AG04449 (cell line): ENCODE measurements at regions of chr11 and their contacts with region 1.

Region 1: DNA sequence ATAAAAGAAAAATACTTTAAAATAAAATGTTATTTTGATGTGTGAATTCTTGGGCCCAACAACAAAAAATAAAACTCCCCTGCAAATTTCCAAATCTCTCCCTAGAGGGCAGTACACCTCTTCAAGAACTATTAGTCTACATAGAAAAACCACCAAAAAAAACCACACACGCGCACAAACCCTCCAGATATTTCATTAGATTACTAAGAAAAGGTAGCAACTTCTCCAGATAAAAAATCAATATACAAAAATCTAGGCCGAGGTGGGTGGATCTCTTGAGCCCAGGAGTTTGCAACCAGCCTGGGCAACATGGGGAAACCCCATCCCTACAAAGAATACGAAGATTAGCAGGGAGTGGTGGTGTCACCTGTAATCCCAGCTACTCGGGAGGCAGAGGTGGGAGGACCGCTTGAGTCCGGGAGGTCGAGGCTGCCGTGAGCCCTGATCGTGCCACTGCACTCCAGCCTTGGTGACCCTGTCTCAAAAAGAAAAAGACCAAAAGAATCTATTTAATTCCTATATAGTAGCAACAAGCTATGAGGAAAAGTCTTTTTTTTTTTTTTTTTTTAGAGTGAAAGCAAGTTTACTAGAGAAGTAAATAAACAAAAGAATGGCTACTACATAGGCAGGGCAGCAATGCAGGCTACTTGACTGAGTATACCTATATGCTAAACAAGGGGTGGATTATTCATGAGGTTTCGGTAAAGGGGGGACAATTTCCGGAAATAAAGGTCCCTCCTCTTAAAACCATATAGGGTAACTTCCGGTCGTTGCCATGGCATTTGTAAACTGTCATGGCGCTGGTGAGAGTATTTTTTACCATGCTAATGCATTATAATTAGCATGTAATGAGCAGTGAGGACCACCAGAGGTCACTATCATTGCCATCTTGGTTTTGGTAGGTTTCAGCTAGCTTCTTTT is 13.1 kb downstream of the B3GNT6 start:
- DNase-seq: peak; percentile 65
- H3K4me3 ChIP-seq: peak overlapping the region; percentile 52
- CTCF ChIP-seq: peak; percentile 48

Region 2: DNA sequence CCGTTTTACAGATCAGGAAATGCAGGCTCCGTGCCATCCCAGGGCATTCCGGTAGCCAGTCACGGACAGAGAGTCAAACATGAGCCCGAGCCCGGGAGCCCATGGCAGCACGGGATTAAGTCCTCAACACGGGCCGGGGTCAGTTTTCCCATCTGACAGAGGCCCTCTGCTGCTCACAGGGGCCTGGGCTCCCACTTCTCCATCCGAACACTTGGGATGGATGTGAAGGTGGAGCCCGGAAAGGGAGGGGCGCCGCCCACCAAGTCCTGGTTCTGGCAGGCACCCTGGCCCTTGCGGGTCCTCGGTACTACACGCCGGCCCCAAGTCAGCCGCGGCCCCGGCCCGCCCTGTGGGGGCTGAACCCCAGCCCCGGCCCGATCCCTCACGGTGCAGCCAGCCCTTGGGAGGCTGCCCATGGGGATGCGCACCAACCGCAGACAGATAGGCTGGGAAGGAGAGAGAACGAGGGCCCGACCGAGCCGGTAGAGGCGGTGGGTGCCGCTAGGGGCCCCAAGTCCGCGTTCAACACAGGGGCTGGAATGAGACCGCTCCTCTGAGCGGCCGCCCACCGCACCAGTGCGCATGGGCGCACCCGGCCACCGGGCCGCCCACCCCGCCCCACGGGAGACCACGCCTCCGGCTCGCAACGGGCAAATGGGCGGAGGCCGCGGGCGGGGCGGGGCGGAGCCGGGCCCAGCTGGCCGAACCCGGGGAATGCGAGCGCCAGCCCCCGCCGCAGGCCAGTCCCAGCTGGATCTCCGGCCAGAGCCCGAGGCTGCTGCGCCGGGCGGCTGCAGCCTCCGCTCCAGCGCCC is 19.2 kb after region 1 on chr11 and contains the start of gene CAPN5:
- CTCF ChIA-PET with region 1: interaction called, 42 read pairs
- POLR2A ChIA-PET with region 1: interaction called, 10 read pairs
- DNase-seq: no peak
- H3K4me3 ChIP-seq: peak within 1 kb of the TSS; percentile 72
- CTCF ChIP-seq: peak; percentile 67

Region 3: DNA sequence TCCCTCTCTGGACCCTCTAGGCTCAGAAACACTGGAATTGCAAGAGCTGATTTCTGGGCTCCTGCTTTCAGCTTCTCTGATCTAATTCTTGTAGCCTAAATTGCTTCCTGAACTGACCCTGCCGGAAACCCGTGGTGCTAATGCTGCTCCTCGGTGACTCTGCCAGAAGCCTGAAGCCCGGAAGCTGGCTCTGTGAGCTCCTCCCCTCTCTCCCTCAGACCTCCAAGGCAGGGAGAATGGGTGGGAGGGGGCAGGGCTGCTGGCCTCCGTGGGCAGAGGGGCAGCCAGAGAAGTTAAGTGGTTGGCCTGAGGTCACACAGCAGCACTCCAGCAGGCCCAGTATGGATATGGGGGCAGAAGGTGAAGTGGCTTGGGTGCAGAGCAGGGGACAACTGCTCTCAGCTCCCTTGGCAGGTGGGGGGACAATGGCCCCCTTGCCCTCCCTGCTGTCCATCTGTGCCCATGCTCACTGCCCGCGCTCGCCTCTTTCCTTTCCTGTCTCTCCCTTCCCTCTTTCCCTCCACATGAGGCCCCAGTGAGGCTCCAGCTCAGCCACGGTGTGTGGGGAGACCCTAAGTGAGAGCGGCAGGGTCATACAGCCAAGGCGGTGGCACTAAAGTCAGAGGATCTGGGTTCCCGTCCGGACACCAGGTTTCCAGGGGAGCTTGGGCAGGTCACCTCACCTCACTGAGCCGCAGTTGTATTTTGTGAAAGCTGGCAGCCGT is 35.7 kb after region 1 on chr11:
- CTCF ChIA-PET with region 1: interaction called, 320 read pairs
- POLR2A ChIA-PET with region 1: no interaction called
- DNase-seq: no peak
- H3K4me3 ChIP-seq: no peak overlapping the region
- CTCF ChIP-seq: no peak

Region 4: GRCh38 chr11:77107950-77108349 is 60.7 kb after region 1 on chr11:
- CTCF ChIA-PET with region 1: interaction called, 23 read pairs
- POLR2A ChIA-PET with region 1: no interaction called
- DNase-seq: peak; percentile 65
- H3K4me3 ChIP-seq: no peak overlapping the region; the same call in 1 of the 2 replicates
- CTCF ChIP-seq: no peak

Region 5: DNA sequence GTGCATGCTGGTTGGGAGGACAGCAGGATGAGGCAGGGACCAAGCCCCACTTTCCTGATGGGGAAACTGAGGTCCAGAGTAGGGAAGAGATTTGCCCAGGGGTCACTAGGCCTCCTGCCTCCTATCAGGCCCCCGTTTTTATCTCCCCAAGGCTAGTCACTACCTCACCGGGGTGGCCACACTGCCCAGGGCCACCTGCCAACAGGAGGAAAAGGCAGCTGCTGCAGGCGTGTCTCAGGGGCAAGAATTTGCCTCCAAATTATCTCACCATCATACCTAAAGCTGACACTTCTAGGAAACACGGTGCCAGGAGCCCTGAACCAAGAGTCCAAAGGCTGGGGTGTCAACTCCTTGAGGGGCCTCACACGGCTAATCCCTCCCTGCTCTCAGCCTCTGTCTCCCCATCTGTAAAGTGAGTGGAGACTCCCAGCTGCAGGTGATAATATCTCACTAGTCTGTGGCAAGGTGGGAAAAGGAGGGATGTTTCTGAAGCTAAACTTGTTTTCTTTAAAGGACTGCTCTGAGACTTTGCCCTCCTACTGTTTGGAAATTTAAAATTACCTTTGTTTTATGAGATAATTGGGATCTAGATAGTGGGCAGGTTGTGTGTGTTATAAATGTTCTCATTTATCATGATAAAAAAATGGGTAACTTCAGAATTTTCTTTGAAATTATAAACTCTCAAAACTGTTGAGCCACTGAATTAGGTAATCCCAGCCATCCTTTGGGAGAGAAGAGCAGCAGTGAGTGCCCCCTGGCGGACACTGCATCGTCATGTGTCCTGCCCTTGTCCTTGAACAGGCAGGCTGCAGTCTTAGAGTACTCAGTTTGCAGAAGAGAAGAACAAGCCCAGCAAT is 140.7 kb after region 1 on chr11:
- CTCF ChIA-PET with region 1: interaction called, 43 read pairs
- POLR2A ChIA-PET with region 1: no interaction called
- DNase-seq: peak; percentile 21
- H3K4me3 ChIP-seq: no peak overlapping the region
- CTCF ChIP-seq: peak; percentile 86